RWPE1 (cell line): ENCODE measurements at regions of chr20 and their contacts with region 1.

Region 1: DNA sequence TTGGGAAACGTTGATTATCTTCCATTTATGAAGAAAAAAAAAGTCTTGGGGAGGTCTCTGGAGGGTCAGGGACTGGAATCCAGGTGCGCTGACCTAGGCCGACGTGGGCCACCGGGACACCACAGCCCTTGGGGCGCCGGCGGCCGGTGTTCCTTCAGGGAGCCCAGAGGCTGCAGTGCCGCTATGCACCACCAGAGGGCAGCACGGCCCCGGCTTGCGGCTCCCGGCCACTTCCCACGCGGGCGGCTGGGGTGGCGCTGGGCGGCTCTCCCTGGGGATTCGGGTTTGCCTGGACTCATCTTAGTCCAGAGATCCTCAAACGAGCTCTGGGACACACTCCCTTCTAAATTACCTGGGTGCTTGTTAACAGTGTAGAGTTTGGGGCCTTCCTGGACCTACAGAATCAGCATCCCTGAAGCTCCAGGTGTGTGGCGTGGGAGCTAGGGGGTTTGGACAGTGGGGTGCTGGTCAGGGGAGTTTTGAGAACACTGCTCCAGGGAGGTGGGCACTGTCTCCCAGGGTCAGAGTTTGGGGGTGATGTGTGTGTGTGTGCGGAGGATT is 23.0 kb upstream of the GTSF1L start:
- DNase-seq: peak; percentile 94
- H3K27ac ChIP-seq: no peak overlapping the region
- CTCF ChIP-seq: peak; percentile 100

Region 2: GRCh38 chr20:43778375-43778774 is 28.6 kb after region 1 on chr20:
- CTCF ChIA-PET with region 1: interaction called, 11 read pairs
- POLR2A ChIA-PET with region 1: no interaction called
- DNase-seq: no peak
- H3K27ac ChIP-seq: no peak overlapping the region
- CTCF ChIP-seq: no peak

Region 3: GRCh38 chr20:43840382-43841070 is 90.7 kb after region 1 on chr20:
- CTCF ChIA-PET with region 1: interaction called, 20 read pairs
- POLR2A ChIA-PET with region 1: no interaction called
- DNase-seq: peak; percentile 94
- H3K27ac ChIP-seq: no peak overlapping the region
- CTCF ChIP-seq: no peak; the same call in 1 of the 2 replicates

Region 4: DNA sequence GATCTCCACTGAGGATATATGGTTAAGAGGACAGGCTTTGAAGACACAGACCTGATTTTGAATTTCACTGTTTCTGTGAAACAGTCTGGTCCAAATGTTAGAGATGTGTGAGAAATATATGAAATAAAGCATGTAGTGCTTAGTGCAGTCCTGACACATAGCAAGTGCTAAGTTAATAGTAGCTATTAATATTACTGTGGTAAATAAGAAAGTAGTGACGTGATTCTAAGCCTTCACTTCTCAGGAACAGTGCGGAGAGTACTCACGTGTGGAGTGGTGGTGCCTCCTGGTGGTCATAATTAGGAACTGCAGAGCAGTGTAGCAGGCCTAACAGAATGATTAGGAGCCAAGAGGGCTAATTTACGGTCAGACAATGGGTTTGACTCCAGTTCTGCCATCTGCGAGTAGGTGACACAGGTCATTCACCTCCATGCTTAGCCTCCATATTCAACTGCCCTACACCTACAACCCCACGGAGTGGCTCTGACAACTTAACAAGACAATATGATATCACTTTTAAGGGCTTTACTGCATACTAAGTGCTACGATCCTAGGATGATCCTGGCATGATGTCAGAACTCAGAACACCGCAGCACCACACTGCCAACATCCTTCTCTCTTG is 330.9 kb after region 1 on chr20:
- CTCF ChIA-PET with region 1: interaction called, 80 read pairs
- POLR2A ChIA-PET with region 1: interaction called, 15 read pairs
- DNase-seq: peak; percentile 94
- H3K27ac ChIP-seq: no peak overlapping the region
- CTCF ChIP-seq: peak; percentile 100